Astrocyte of the cerebellum (primary cell): ENCODE measurements at regions of chr5 and their contacts with region 1.

Region 1: DNA sequence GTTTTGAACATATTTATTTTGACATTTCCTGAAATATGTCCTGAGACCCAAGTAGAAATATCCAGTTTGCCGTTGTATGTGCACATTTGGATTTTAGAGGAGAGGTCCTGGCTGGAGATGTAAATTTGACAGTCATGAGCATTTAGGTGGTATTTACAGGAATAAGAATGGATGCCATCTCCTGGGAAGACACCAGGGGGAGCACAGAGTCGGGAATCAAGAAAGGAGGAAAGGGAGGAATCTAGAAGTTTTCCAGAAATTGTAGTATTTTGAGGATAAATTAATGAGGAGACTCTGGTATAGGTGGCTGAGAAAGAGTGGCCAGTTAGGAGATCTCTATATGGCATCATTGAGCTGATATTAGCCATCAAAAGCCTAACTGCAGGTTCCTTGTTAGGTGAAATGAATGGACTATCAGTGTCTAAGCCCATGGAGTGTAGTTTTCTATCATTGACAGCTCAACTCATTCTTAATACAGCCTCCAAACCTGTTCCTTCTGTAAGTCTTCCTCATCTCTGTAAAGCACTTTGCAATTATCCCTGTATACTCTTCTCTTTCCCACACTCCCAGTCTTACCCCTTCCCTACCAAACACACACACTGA is 7.2 kb downstream of the GAPT start:
- DNase-seq: peak; percentile 18
- H3K4me3 ChIP-seq: no peak overlapping the region
- CTCF ChIP-seq: peak; percentile 84

Region 2: DNA sequence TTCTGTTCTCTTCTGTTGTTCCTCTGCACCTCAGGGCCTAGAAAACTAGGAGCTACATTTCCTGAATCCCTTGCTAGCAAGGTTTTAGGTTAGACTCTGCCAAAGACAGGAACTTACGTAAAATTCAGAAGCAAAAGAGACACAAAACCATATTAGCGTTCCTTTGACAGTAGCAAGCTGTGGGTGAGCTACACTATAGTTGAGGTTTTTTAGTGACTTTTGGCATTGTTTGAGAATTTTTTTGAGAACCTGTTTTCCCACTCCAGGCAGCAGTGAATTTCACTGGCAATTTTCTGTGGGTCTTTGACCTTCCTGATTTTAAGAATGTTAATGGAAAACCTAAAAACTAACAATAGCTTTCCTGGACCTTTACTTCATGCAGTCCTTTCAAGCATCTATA is 74.3 kb before region 1 on chr5:
- in situ Hi-C with region 1: no loop called
- DNase-seq: no peak
- H3K4me3 ChIP-seq: no peak overlapping the region
- CTCF ChIP-seq: no peak

Region 3: DNA sequence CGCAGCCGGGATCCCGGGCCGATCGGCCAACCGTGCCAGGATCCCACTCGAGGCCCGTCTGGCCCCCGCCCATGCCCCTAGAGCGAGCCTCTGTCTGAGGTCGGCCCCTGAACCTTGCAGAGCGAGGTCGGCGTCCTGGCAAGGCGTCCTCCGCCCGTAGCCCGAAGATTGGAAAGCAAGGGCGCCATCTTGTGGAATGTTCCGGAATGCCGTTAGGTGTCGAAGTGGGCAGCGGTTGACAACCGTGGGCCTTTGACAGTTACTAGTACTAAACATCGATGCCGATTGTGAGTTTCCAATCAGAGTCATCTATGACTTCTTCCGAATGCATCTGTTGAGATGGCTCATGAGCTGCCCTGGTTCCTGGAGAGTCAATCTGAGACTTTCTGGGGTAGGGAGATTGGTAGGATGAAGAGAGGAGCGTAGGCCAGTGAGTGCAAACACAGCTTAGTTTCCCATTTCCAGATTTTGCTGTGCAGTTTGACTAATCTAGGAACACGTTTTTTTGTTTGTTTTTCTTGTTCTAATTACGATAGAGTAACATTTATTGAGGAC is 37.6 kb before region 1 on chr5:
- in situ Hi-C with region 1: no loop called
- DNase-seq: peak; percentile 75
- H3K4me3 ChIP-seq: peak overlapping the region; percentile 69
- CTCF ChIP-seq: peak; percentile 75

Region 4: DNA sequence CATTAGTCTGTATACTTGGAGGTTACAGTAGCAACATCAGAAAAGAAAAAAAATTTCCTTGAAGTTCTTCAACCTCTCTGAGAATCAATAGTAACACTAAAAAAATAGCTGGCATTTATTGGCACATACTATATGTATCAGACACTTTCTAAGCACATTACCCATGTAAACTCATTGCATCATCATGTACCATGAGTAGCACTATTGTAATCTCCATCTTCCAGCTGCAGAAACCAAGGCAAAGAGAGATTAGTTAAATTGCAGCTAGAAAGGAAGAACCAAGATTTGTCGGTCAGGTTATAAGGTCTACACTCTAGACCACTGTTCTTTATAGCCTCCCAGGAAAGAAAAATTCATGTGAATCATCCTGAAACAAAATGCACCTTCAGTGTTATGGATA is 53.1 kb after region 1 on chr5:
- in situ Hi-C with region 1: no loop called
- DNase-seq: no peak
- H3K4me3 ChIP-seq: no peak overlapping the region
- CTCF ChIP-seq: no peak

Region 5: GRCh38 chr5:58849921-58850667 is 351.7 kb after region 1 on chr5:
- in situ Hi-C with region 1: loop called (anchors 5 kb)
- DNase-seq: peak; percentile 32
- H3K4me3 ChIP-seq: no peak overlapping the region
- CTCF ChIP-seq: peak; percentile 51

Region 6: GRCh38 chr5:58886315-58887207 is 388.1 kb after region 1 on chr5:
- in situ Hi-C with region 1: no loop called
- DNase-seq: peak; percentile 36
- H3K4me3 ChIP-seq: no peak overlapping the region
- CTCF ChIP-seq: peak; percentile 91